Posterior vena cava (tissue), 2 donors: ENCODE measurements at regions of chr20 and their contacts with region 1.

Region 1: DNA sequence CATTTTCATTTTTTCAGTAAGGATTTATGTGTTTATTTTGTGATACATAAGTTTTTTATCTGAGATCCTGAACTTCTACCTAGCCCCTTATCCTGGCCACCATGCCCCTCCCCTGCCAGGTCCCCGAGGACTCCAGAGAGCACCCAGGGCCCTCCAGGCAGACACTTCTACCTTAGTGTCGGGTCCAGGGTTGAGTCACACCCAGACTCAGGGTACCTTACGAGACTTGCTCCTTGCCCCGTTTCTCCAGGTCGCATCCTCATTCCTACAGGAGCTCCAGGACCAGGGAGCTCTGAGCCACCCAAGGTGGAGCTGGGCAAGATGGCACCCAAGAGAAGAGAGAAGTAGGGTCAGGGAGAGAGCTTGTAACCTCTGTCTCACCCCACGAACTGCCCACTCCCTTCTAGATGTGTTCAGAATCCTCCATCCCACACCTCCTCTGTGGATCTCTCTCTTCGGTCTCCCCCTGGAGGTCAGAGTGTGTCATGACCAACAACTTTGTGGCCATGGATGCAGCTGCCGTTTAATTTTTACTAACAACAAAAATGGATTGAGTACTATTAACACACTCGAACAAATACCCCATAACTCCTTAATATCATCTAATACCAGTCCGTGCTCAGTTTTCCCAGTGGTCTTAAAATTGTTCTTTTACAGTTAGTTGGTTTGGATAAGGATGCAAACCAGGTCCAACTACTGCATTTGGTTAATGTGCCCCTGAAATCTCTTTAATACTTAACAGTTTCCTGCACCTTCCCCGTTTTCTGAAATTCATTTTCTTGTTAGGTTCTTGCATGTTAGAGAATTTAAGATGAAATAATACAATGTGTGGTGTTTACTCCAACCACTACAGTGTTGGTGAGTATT is 130.6 kb upstream of the INSM1 start:
- DNase-seq: no peak

Region 2: GRCh38 chr20:20083807-20084206 is 153.5 kb before region 1 on chr20:
- intact Hi-C with region 1: loop called in 1 of 2 experiments (anchors 10 kb)
- DNase-seq: no peak

Region 3: GRCh38 chr20:20096421-20096820 is 140.9 kb before region 1 on chr20:
- intact Hi-C with region 1: loop called in 1 of 2 experiments (anchors 10 kb)
- DNase-seq: no peak

Region 4: DNA sequence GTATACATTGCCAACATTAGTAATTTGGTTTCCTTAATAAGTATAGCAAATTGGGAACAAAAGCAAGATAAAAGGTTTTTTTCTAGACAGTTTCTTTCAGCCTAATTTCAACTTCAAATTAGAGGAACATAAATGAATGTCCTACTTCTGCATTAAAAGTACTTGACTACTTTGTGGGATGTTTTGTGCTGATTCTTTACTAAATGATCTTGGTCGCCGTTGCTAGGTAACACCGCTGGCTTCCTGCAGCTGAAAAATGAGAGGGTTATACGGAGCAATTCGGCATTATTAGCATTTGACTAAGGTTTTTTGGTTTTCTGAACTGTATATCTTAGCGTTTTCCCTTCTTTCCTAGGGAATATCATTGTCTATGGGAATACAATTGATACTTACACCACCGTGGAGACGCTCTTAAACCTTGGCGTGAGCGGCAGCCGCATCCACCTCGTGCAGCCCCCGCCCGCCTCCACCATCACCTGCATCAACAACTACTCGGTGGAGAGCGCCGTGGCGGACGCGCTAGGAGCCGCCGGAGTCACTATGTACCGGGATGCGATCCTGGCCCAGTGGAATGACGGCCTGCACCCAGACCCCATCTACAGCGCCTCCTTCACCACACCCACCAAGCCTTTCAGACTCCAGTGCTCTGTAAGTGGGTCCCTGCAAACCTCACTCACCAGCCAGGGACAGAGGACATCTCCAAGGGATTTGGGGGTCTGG is 39.6 kb after region 1 on chr20:
- intact Hi-C with region 1: no loop called
- DNase-seq: no peak